ENCODE measurements at regions of chr14 and their contacts with region 1.

Region 1: GRCh38 chr14:51219473-51220448 is 20.3 kb upstream of the TMX1 start:
- DNase-seq: no peak
- H3K4me3 ChIP-seq: no peak overlapping the region
- H3K27ac ChIP-seq: no peak overlapping the region
- H3K4me1 ChIP-seq: no peaks in the 10 kb centered on the region
- H3K27me3 ChIP-seq: no peaks in the 10 kb centered on the region
- CTCF ChIP-seq: peak; percentile 54 to 57

Region 2: DNA sequence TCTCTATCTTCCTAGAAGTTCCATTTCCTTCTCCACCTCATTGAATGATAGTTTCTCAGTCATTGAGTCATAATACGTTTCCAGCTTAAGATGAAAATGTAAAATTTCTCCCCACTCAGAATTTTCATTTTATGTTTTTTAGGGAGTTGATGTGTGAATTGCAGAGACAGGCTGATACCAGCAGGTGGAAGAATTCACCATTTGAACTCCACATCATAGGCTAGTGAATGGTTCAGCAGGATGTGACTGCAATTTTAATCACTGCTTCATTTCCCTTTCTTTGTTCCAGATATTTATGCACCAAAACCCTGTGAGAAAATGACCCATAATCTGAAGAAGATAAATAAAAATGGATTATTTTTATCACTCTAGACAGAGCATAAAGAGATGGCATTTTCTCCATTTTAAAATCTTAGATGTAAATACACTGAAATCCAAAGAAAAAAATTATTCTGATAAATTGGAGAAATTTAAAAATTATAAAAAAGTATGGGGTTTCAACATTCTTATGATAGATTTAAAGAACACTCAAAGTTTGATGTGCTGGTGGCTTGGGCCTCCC is 264.9 kb before region 1 on chr14:
- intact Hi-C with region 1: loop called (anchors 10 kb)
- DNase-seq: no peak
- H3K4me3 ChIP-seq: no peak overlapping the region
- H3K27ac ChIP-seq: no peak overlapping the region
- H3K4me1 ChIP-seq: peaks cover 0 to 5% (median 0%) of the 10 kb centered on the region in 4 donors
- H3K27me3 ChIP-seq: no peaks in the 10 kb centered on the region
- CTCF ChIP-seq: peak; percentile 57 to 64

Region 3: DNA sequence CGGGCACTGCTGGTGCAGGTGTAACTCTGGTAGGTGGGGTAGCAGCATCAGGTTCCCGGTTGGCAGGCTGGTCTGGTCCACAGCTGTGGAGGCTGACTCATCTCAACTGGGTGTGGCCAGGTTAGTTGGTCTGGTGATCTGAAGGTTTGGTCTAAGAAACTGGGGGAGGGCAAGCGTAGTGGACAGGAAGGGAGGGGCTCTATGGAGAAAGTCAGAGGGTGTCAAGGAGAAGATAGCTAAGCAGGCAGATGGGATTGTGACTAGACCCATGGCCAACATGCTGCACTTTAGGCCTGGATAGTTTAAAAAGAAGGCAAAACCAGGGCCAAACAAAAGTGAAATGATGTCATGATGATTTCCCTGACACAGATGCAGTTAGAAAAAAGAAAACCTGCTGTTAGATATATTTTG is 132.7 kb before region 1 on chr14:
- intact Hi-C with region 1: no loop called
- DNase-seq: no peak
- H3K4me3 ChIP-seq: no peak overlapping the region
- H3K27ac ChIP-seq: no peak overlapping the region
- H3K4me1 ChIP-seq: no peaks in the 10 kb centered on the region
- H3K27me3 ChIP-seq: no peaks in the 10 kb centered on the region
- CTCF ChIP-seq: no peak

Region 4: DNA sequence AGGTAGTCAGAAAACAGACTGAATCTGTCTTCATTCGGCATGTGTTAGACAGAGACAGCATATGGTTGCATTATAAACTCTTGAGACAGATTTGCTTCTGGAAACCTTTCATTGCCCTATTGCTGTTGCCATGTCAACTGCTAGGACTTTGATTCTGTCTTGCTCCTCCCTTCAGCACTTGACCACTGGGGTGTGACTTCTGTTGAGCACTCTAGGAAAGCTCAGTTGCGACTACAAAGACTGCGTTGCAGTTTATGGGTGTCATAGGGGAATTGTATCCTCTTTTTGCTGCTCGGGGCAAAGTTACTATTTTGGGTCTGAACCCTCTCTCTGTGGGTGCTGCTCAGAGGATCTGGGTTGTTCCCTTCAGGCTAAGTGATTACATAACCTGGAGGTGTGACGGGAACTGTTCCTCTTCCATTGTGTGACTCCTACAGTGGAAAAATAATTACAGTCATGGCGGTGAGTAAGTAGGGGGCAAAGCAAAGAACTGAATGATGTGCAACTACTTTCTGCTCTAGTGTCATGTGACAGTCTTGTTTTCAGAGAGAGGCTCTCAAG is 80.6 kb before region 1 on chr14:
- intact Hi-C with region 1: no loop called
- DNase-seq: no peak
- H3K4me3 ChIP-seq: no peak overlapping the region
- H3K27ac ChIP-seq: no peak overlapping the region
- H3K4me1 ChIP-seq: no peaks in the 10 kb centered on the region
- H3K27me3 ChIP-seq: no peaks in the 10 kb centered on the region
- CTCF ChIP-seq: no peak

Region 5: DNA sequence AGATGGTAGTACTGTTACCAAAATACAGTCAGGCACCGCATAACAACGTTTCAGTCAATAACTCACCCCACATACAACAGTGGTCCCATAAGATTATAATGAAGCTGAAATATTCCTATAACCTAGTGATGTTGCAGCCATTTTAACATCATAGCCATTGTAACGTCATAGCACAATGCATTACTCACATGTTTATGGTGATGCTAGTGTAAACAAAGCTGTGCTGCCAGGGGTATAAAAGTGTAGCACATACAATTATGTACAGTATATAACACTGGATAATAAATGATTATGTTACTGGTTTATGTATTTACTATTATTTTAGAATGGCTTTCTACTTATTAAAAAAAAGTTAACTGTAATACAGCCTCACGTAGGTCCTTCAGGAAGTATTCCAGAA is 1369.9 kb after region 1 on chr14:
- intact Hi-C with region 1: no loop called
- DNase-seq: no peak
- H3K4me3 ChIP-seq: no peak overlapping the region
- H3K27ac ChIP-seq: no peak overlapping the region
- H3K4me1 ChIP-seq: no peaks in the 10 kb centered on the region
- H3K27me3 ChIP-seq: no peaks in the 10 kb centered on the region
- CTCF ChIP-seq: no peak